ENCODE measurements at regions of chr10 and their contacts with region 1.

Region 1: GRCh38 chr10:68826764-68827591 is at the start of gene STOX1:
- DNase-seq: peak; percentile 86 to 93
- H3K4me3 ChIP-seq: peak within 1 kb of the TSS; percentile 77
- H3K4me3 Mint-ChIP-seq: peak within 1 kb of the TSS; percentile 90
- H3K27ac Mint-ChIP-seq: peak within 1 kb of the TSS; percentile 88
- H3K4me1 ChIP-seq: 0 out of 2 replicates have a peak, but pooled peaks cover 8% of the 10 kb centered on the region
- H3K4me1 Mint-ChIP-seq: peaks cover 14% of the 10 kb centered on the region
- H3K27me3 ChIP-seq: no peaks in the 10 kb centered on the region
- H3K27me3 Mint-ChIP-seq: no peaks in the 10 kb centered on the region
- CTCF ChIP-seq: peak; percentile 36 to 39
- total RNA-seq, gene STOX1: 8.5 and 9.0 TPM in 2 replicates

Region 2: GRCh38 chr10:68406815-68407548 is 420.0 kb before region 1 on chr10 and contains the start of gene RUFY2:
- CTCF ChIA-PET with region 1: no interaction called
- POLR2A ChIA-PET with region 1: interaction called, 12 read pairs
- intact Hi-C with region 1: no loop called
- DNase-seq: peak; percentile 89 to 98
- H3K4me3 ChIP-seq: peak within 1 kb of the TSS; percentile 99
- H3K4me3 Mint-ChIP-seq: peak within 1 kb of the TSS; percentile 95
- H3K27ac Mint-ChIP-seq: peak within 1 kb of the TSS; percentile 97
- H3K4me1 ChIP-seq: peaks cover 7% of the 10 kb centered on the region; the same call in 1 of the 2 replicates
- H3K4me1 Mint-ChIP-seq: peaks cover 16% of the 10 kb centered on the region
- H3K27me3 ChIP-seq: no peaks in the 10 kb centered on the region
- H3K27me3 Mint-ChIP-seq: no peaks in the 10 kb centered on the region
- CTCF ChIP-seq: peak; percentile 63 to 81
- total RNA-seq, gene RUFY2: 42.4 and 44.0 TPM in 2 replicates

Region 3: DNA sequence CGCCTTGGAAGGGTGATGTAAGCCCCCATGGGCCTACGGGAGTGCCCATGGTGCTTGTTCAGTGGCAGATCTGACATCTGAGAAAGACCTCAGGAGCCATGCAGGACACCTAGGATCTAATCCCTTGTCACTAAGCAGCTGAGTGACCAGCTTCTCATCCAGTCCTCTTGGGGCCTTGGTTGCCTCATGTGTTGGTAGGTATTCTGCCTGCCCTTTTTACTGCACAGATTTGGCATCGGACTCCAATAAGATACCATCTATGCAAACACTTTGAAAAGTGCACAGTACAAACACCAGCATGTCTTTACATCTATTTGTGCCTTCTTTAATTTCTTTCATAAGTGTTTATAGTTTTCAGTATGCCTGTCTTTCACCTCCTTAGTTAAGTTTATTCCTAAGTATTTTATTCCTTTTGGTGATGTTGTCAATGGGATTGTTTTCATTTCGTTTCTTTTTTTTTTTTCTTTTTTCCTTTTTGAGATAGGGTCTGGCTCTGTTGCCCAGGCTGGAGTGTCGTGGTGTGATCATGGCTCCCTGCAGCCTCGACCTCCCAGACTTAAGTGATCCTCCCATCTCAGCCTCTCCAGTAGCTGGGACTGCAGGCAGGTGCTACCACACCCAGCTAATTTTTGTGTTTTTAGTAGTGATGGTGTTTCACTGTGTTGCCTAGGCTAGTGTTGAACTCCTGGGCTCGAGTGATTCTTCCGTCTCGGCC is 10.8 kb after region 1 on chr10:
- CTCF ChIA-PET with region 1: interaction called, 4 read pairs
- POLR2A ChIA-PET with region 1: interaction called, 10 read pairs
- intact Hi-C with region 1: no loop called
- DNase-seq: no peak
- H3K4me3 ChIP-seq: no peak overlapping the region
- H3K4me3 Mint-ChIP-seq: no peak overlapping the region
- H3K27ac Mint-ChIP-seq: no peak overlapping the region
- H3K4me1 ChIP-seq: no peaks in the 10 kb centered on the region
- H3K4me1 Mint-ChIP-seq: no peaks in the 10 kb centered on the region
- H3K27me3 ChIP-seq: no peaks in the 10 kb centered on the region
- H3K27me3 Mint-ChIP-seq: no peaks in the 10 kb centered on the region
- CTCF ChIP-seq: no peak

Region 4: DNA sequence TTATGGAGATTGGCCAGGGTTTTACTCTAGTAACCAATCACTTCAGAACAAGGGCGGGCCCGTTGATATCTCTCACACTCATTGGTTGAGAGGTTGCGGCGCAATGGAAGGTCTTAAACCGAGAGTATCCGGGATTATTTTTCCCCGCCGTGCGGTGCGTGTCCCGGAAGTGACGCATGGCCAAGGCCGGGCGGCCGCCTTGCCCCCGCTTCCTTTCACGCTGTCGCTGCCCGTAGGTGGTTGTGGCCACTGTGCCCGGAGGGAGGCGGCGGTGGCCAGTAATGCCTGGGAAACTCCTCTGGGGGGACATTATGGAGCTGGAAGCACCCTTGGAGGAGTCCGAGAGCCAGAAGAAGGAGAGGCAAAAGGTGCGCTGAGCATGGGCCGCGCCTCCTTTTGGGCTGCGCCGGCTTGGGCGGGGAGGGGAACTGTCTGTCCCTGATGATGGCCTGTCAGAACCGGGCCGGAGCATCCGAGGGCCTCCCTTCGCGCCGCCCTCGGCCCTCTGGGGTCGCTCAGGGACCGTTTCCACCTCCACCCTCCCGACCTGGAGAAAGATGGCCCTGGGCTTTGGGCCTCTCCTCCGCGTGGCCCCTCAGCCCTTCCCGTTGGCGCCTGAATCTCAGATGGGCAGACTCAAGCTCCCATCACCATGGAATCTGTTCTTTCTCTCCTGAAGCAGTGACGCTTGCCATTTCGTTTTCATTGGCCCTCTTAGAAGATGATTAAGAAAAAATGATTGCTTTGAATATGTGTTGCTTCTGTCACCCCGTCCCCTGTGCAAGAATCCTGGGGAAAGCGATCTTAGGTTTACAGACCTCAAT is 74.3 kb after region 1 on chr10 and contains the start of gene DDX50:
- CTCF ChIA-PET with region 1: interaction called, 16 read pairs
- POLR2A ChIA-PET with region 1: interaction called, 45 read pairs
- intact Hi-C with region 1: loop called (anchors 1 kb)
- DNase-seq: peak; percentile 100
- H3K4me3 ChIP-seq: peak within 1 kb of the TSS; percentile 67
- H3K4me3 Mint-ChIP-seq: peak within 1 kb of the TSS; percentile 96
- H3K27ac Mint-ChIP-seq: peak within 1 kb of the TSS; percentile 99
- H3K4me1 ChIP-seq: peaks cover 12% of the 10 kb centered on the region
- H3K4me1 Mint-ChIP-seq: peaks cover 40% of the 10 kb centered on the region
- H3K27me3 ChIP-seq: no peaks in the 10 kb centered on the region
- H3K27me3 Mint-ChIP-seq: no peaks in the 10 kb centered on the region
- CTCF ChIP-seq: peak; percentile 51 to 52
- total RNA-seq, gene DDX50: 76.7 and 81.4 TPM in 2 replicates